SK-N-SH (cell line): ENCODE measurements at regions of chr17 and their contacts with region 1.

Region 1: GRCh38 chr17:81200695-81201580 is 21.8 kb downstream of the CEP131 start:
- DNase-seq: peak; percentile 91
- H3K4me3 ChIP-seq: no peak overlapping the region
- H3K27ac ChIP-seq: peak overlapping the region in 1 of 2 experiments; percentile 13; a peak in 1 of 4 replicates
- H3K4me1 ChIP-seq: peaks cover 0 to 3% of the 10 kb centered on the region in 2 experiments; a peak in 1 of 4 replicates
- H3K27me3 ChIP-seq: no peaks in the 10 kb centered on the region
- CTCF ChIP-seq: peak; percentile 73
- EP300 ChIP-seq: no peak
- RAD21 ChIP-seq: peak; percentile 75

Region 2: GRCh38 chr17:81153340-81153803 is 47.6 kb before region 1 on chr17:
- CTCF ChIA-PET with region 1: interaction called, 11 read pairs
- POLR2A ChIA-PET with region 1: no interaction called
- DNase-seq: peak; percentile 15
- H3K4me3 ChIP-seq: no peak overlapping the region
- H3K27ac ChIP-seq: no peak overlapping the region
- H3K4me1 ChIP-seq: no peaks in the 10 kb centered on the region
- H3K27me3 ChIP-seq: no peaks in the 10 kb centered on the region; the same call in 1 of the 2 replicates
- CTCF ChIP-seq: no peak
- EP300 ChIP-seq: no peak
- RAD21 ChIP-seq: no peak

Region 3: DNA sequence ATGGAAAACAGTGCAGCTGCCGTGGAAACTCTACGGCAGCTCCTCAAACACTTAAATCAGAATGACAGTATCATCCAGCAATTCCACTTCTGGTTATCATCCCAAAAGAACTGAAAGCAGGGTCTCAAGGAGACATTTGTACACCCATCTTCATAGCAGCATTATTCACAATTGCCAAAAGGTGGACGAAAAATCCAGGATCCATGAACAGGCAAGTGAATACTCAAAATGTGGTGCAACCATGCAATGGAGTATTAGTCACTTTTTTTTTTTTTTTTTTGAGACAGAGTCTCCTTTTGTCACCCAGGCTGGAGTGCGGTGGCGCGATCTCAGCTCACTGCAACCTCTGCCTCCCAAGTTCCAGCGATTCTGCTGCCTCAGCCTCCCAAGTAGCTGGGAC is 24.3 kb before region 1 on chr17:
- CTCF ChIA-PET with region 1: interaction called, 18 read pairs
- POLR2A ChIA-PET with region 1: no interaction called
- DNase-seq: no peak
- H3K4me3 ChIP-seq: no peak overlapping the region
- H3K27ac ChIP-seq: no peak overlapping the region
- H3K4me1 ChIP-seq: peaks cover 0 to 6% of the 10 kb centered on the region in 2 experiments; a peak in 1 of 4 replicates
- H3K27me3 ChIP-seq: no peaks in the 10 kb centered on the region
- CTCF ChIP-seq: peak; percentile 39
- EP300 ChIP-seq: no peak
- RAD21 ChIP-seq: no peak

Region 4: GRCh38 chr17:81222906-81223761 is 22.2 kb after region 1 on chr17 and contains the start of gene CEP131:
- CTCF ChIA-PET with region 1: interaction called, 19 read pairs
- POLR2A ChIA-PET with region 1: no interaction called
- DNase-seq: peak; percentile 100
- H3K4me3 ChIP-seq: peak within 1 kb of the TSS; percentile 76 to 94
- H3K27ac ChIP-seq: peak within 1 kb of the TSS in 1 of 2 experiments; percentile 24; a peak in 1 of 4 replicates
- H3K4me1 ChIP-seq: peaks cover 7 to 16% of the 10 kb centered on the region in 2 experiments; a peak in 3 of 4 replicates
- H3K27me3 ChIP-seq: no peaks in the 10 kb centered on the region
- CTCF ChIP-seq: no peak
- EP300 ChIP-seq: no peak
- RAD21 ChIP-seq: no peak
- polyA plus RNA-seq, gene CEP131: 26.5 and 34.8 TPM in 2 replicates

Region 5: DNA sequence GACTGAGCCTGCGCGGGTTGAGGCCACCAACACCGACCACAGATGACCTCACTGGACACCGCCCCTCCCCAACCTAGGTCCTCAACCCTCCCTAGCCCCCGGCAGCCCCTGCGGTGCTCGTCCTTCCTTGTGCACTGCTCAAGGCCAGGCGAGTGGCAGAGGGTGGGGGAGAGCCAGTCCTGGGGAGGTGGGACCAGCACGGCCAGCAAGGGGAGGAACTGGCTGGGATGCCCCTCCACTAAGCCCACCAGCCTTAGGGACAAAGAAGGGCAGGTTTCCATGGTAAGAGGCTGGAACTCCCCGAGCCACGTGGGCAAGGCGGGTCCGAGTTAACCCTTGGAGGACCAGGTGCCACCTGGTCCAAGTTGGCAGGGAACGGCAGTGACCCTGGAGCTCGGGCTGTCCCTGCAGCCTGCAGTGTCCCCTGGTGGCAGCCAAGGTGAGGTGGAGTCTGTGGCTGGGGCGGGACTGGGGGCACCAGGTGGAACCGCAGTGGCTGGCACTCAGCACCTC is 336.5 kb after region 1 on chr17:
- CTCF ChIA-PET with region 1: no interaction called
- POLR2A ChIA-PET with region 1: no interaction called
- DNase-seq: peak; percentile 92
- H3K4me3 ChIP-seq: no peak overlapping the region
- H3K27ac ChIP-seq: no peak overlapping the region
- H3K4me1 ChIP-seq: peaks cover 0 to 35% of the 10 kb centered on the region in 2 experiments; a peak in 1 of 4 replicates
- H3K27me3 ChIP-seq: no peaks in the 10 kb centered on the region
- CTCF ChIP-seq: peak; percentile 60
- EP300 ChIP-seq: no peak
- RAD21 ChIP-seq: peak; percentile 80